ENCODE measurements at regions of chrX and their contacts with region 1.

Region 1: DNA sequence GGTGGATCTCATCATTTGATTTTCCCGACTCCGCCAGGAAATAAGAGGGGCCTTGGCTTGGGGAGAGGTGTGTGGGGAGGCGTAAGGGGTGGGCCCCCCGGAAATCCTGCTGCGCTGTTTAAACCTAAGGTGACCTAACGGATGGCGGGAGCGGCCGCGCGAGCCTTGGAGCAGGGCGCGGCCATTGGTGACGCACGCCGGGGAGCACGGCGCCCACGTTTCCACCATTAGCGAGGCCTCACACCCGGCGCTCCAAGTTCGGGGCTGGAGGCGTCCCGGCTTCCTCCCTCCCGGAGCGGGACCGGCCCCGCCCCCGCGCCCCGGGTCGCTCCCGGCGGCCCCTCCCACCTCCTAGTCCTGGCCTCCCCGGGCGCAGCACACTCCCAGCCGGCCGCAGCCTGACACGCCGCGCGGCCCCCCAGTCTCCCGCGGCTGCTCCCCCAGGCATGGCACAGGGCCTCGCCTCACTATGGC is at the start of gene SMS:
- DNase-seq: peak; percentile 80 to 86
- ATAC-seq: peak; percentile 80 to 95 (median 90)
- H3K4me3 ChIP-seq: peak within 1 kb of the TSS; percentile 71
- H3K27ac ChIP-seq: peak within 1 kb of the TSS; percentile 66
- H3K4me1 ChIP-seq: no peaks in the 10 kb centered on the region
- H3K27me3 ChIP-seq: peaks cover 0 to 6% (median 0%) of the 10 kb centered on the region in 3 donors
- CTCF ChIP-seq: no peak
- total RNA-seq, gene SMS: 18.6 to 52.9 (median 33.6) TPM

Region 2: GRCh38 chrX:21839334-21840192 is 100.8 kb before region 1 on chrX and contains the start of gene MBTPS2:
- intact Hi-C with region 1: loop called in 1 of 2 experiments (anchors 10 kb)
- DNase-seq: peak; percentile 81 to 89
- ATAC-seq: peak; percentile 93 to 95 (median 94)
- H3K4me3 ChIP-seq: peak within 1 kb of the TSS; percentile 76
- H3K27ac ChIP-seq: peak within 1 kb of the TSS; percentile 89
- H3K4me1 ChIP-seq: no peaks in the 10 kb centered on the region
- H3K27me3 ChIP-seq: no peaks in the 10 kb centered on the region
- CTCF ChIP-seq: no peak
- total RNA-seq, gene MBTPS2: 12.0 to 14.6 (median 13.2) TPM

Region 3: DNA sequence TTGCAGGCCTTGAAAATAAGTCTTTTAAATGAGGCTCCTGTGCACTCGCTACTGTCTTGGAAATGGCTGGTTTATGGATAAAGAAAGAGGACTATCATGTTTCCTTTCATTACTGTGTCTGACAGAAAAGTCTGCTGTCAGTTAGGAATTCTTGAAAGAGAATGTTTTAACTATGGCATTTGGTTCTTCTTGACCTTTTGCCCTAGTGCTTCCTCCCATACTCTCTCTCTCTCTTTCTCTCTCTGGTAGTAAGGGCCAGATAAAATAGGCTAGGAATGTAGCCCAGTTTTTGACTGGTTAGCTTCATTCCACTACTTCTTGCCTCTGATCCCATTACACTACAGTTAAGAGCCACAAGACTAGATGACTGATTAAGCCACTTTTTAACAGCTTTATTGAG is 54.8 kb before region 1 on chrX:
- intact Hi-C with region 1: no loop called
- DNase-seq: no peak
- ATAC-seq: no peak
- H3K4me3 ChIP-seq: no peak overlapping the region
- H3K27ac ChIP-seq: no peak overlapping the region
- H3K4me1 ChIP-seq: no peaks in the 10 kb centered on the region
- H3K27me3 ChIP-seq: no peaks in the 10 kb centered on the region
- CTCF ChIP-seq: no peak